AG04450 (cell line): ENCODE measurements at regions of chr11 and their contacts with region 1.

Region 1: DNA sequence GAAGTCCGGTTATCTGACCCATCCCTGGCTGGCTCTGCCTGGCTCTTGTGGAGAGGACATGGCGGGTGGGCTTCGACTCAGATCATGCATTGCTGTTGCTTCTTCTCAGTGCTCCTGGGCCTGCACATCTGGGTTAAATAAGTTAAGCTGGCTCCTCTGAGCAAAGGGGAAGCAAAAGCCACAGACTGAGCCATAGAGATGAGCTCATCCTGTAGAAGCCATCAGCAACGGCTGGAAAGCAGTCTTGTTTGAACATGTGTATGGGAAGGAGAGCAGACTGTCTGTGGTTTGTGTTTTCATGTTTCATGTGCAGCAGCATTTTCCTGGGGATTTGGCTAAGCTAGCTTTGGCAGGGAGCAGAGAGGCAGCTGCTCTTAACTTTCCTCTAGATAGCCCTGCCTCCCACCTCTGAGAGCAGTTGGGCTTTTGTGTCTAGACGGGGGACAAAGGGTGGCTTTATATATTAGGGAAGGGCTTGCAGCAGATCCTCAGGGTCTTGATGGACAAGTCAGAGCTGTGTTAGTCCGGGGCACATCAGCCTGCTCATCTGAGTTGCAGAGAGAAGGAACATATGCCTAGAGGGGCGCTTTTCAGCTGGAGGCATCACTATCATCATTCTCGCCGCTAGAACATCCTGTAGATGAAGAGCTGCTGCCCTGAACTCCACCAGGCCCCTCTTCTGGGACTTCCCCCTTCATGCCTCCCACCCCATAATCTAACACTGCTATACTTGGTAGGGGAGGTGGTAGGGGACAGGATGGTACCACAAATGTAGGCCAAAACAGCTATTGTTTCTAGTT is 14.9 kb downstream of the DCPS start:
- DNase-seq: peak; percentile 88
- H3K4me3 ChIP-seq: peak overlapping the region; percentile 49
- H3K27ac ChIP-seq: peak overlapping the region; percentile 99
- H3K27me3 ChIP-seq: no peaks in the 10 kb centered on the region
- CTCF ChIP-seq: no peak

Region 2: GRCh38 chr11:125874556-125875124 is 444.1 kb before region 1 on chr11:
- CTCF ChIA-PET with region 1: no interaction called
- POLR2A ChIA-PET with region 1: no interaction called
- DNase-seq: peak; percentile 41
- H3K4me3 ChIP-seq: peak overlapping the region; percentile 7; the same call in 1 of the 2 replicates
- H3K27ac ChIP-seq: no peak overlapping the region
- H3K27me3 ChIP-seq: peaks cover 4% of the 10 kb centered on the region
- CTCF ChIP-seq: peak; percentile 86

Region 3: GRCh38 chr11:126303623-126304456 is 14.9 kb before region 1 on chr11 and contains the start of gene DCPS:
- CTCF ChIA-PET with region 1: interaction called, 6 read pairs
- POLR2A ChIA-PET with region 1: interaction called, 14 read pairs
- DNase-seq: peak; percentile 60
- H3K4me3 ChIP-seq: peak within 1 kb of the TSS; percentile 92
- H3K27ac ChIP-seq: peak within 1 kb of the TSS; percentile 93
- H3K27me3 ChIP-seq: no peaks in the 10 kb centered on the region
- CTCF ChIP-seq: no peak
- polyA plus RNA-seq, gene DCPS: 20.4 and 24.3 TPM in 2 replicates

Region 4: GRCh38 chr11:126355324-126355925 is 36.7 kb after region 1 on chr11 and contains the start of gene ST3GAL4:
- CTCF ChIA-PET with region 1: interaction called, 4 read pairs
- POLR2A ChIA-PET with region 1: interaction called, 16 read pairs
- DNase-seq: no peak
- H3K4me3 ChIP-seq: peak within 1 kb of the TSS; percentile 93
- H3K27ac ChIP-seq: peak within 1 kb of the TSS; percentile 62
- H3K27me3 ChIP-seq: no peaks in the 10 kb centered on the region
- CTCF ChIP-seq: no peak
- polyA plus RNA-seq, gene ST3GAL4: 13.1 and 15.3 TPM in 2 replicates